ENCODE measurements at regions of chr17 and their contacts with region 1.

Region 1: DNA sequence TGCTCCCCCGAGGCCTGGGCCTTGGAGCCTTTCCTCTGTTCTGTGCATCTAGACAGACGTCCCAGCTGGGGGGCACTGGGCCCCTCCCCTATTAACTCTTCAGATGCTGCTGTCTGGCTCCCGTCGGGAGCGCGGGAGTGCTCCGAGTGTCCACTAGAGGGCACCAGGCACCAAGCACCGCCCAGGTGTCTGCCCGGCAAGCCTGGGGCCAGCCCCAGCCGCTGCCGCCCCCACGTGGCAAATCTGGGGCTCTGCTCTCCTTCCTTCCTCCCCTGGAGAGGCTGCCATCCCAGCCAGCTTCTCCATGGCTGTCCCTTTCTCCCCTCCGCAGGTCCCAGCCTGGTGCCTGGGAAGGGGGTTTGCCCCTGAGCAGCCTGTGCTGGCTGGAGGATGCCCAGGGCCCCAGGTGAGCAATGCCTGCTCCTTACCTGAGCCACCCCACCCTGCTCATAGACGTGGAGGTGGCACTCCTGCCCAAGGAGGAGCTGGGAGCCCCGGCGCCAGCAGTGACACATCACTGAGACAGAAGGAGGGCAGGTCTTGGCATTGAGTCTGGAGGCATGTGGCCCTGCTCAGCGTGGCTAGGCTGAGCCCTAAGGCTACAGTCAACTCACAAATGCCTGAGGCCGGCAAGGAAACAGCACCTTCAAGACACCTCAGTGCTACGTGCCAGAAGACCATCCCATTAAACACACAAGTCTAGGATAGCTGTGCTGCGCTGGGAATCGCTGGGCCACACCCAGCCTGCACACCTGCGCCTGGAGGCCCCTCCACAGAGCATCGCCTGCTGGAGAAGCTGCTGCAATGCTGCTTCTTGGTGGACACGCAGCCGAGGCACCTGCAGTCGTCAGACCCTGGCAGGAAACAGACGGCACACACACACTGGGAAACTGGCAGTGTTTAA is 19.7 kb downstream of the TMEM235 start:
- DNase-seq: peak; percentile 79
- ATAC-seq: peak; percentile 80
- H3K4me3 ChIP-seq: peak overlapping the region in 1 of 3 experiments; percentile 3; a peak in 1 of 6 replicates
- H3K27ac ChIP-seq: no peak overlapping the region
- H3K4me1 ChIP-seq: peaks cover 71% of the 10 kb centered on the region
- H3K27me3 ChIP-seq: peaks cover 0 to 17% of the 10 kb centered on the region in 2 experiments; a peak in 4 of 5 replicates
- CTCF ChIP-seq: peak; percentile 99
- EP300 ChIP-seq: no peak
- POLR2A ChIP-seq: no peak
- RAD21 ChIP-seq: peak; percentile 100

Region 2: DNA sequence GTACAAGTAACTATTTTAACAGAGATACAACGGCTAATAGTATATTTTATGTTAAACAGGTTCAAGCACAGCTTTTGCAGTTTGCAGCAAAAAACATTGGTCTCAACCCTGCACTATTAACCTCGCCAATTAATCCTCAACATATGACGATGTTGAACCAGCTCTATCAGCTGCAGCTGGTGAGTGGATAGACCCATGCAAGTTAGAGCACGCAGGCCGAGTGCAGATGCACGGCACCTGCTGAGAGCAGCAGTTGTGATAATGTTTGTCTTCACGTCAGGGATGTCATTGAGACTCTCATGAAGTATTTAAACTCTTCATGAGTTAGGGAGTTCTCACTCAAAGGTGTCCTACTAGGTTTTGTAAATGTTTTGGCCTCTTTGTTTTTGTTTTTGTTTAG is 168.2 kb before region 1 on chr17:
- CTCF ChIA-PET with region 1: interaction called, 12 read pairs
- POLR2A ChIA-PET with region 1: no interaction called
- in situ Hi-C with region 1: no loop called
- intact Hi-C with region 1: loop called (anchors 1 kb)
- DNase-seq: no peak
- ATAC-seq: no peak
- H3K4me3 ChIP-seq: no peak overlapping the region
- H3K27ac ChIP-seq: no peak overlapping the region
- H3K4me1 ChIP-seq: no peaks in the 10 kb centered on the region
- H3K27me3 ChIP-seq: no peaks in the 10 kb centered on the region
- CTCF ChIP-seq: no peak
- EP300 ChIP-seq: no peak
- POLR2A ChIP-seq: no peak
- RAD21 ChIP-seq: no peak

Region 3: GRCh38 chr17:78112518-78113226 is 138.5 kb before region 1 on chr17:
- CTCF ChIA-PET with region 1: interaction called, 13 read pairs
- POLR2A ChIA-PET with region 1: interaction called, 3 read pairs
- in situ Hi-C with region 1: no loop called
- intact Hi-C with region 1: loop called (anchors 1 kb)
- DNase-seq: peak; percentile 52
- ATAC-seq: peak; percentile 74
- H3K4me3 ChIP-seq: no peak overlapping the region
- H3K27ac ChIP-seq: no peak overlapping the region
- H3K4me1 ChIP-seq: peaks cover 27% of the 10 kb centered on the region
- H3K27me3 ChIP-seq: no peaks in the 10 kb centered on the region
- CTCF ChIP-seq: peak; percentile 99
- EP300 ChIP-seq: no peak
- POLR2A ChIP-seq: 0 out of 4 replicates have a peak, but pooled peaks of 1 of the 2 experiments have one; percentile 12
- RAD21 ChIP-seq: peak; percentile 98

Region 4: GRCh38 chr17:78204387-78205123 is 46.6 kb before region 1 on chr17:
- CTCF ChIA-PET with region 1: no interaction called
- POLR2A ChIA-PET with region 1: no interaction called
- in situ Hi-C with region 1: no loop called
- intact Hi-C with region 1: no loop called
- DNase-seq: no peak
- ATAC-seq: peak; percentile 18
- H3K4me3 ChIP-seq: no peak overlapping the region
- H3K27ac ChIP-seq: no peak overlapping the region
- H3K4me1 ChIP-seq: no peaks in the 10 kb centered on the region
- H3K27me3 ChIP-seq: no peaks in the 10 kb centered on the region
- CTCF ChIP-seq: no peak
- EP300 ChIP-seq: no peak
- POLR2A ChIP-seq: peak; percentile 1 to 60; a peak in 2 of 4 replicates
- RAD21 ChIP-seq: no peak

Region 5: GRCh38 chr17:78214706-78215061 is 36.5 kb before region 1 on chr17:
- CTCF ChIA-PET with region 1: interaction called, 3 read pairs
- POLR2A ChIA-PET with region 1: no interaction called
- in situ Hi-C with region 1: no loop called
- intact Hi-C with region 1: loop called (anchors 1 kb)
- DNase-seq: no peak
- ATAC-seq: no peak
- H3K4me3 ChIP-seq: peak overlapping the region; percentile 82 to 93 (median 91)
- H3K27ac ChIP-seq: peak overlapping the region; percentile 72
- H3K4me1 ChIP-seq: peaks cover 26% of the 10 kb centered on the region
- H3K27me3 ChIP-seq: no peaks in the 10 kb centered on the region; a peak in 1 of 5 replicates
- CTCF ChIP-seq: no peak
- EP300 ChIP-seq: no peak
- POLR2A ChIP-seq: no peak
- RAD21 ChIP-seq: no peak

Region 6: GRCh38 chr17:78313735-78314648 is 62.8 kb after region 1 on chr17:
- CTCF ChIA-PET with region 1: no interaction called
- POLR2A ChIA-PET with region 1: no interaction called
- in situ Hi-C with region 1: no loop called
- intact Hi-C with region 1: loop called (anchors 10 kb)
- DNase-seq: peak; percentile 57
- ATAC-seq: peak; percentile 66
- H3K4me3 ChIP-seq: peak overlapping the region; percentile 17 to 67 (median 45); a peak in 5 of 6 replicates
- H3K27ac ChIP-seq: no peak overlapping the region
- H3K4me1 ChIP-seq: peaks cover 52% of the 10 kb centered on the region
- H3K27me3 ChIP-seq: peaks cover 28 to 72% of the 10 kb centered on the region in 2 experiments
- CTCF ChIP-seq: peak; percentile 23
- EP300 ChIP-seq: no peak
- POLR2A ChIP-seq: no peak
- RAD21 ChIP-seq: 0 out of 2 replicates have a peak, but pooled peaks have one; percentile 17

Measured in HepG2 (cell line).